ENCODE measurements at regions of chr4 and their contacts with region 1.

Region 1: GRCh38 chr4:3480528-3481112 is 17.5 kb downstream of the DOK7 start:
- DNase-seq: peak; percentile 43 to 71 (median 66)
- H3K4me3 ChIP-seq: no peak overlapping the region
- H3K27ac ChIP-seq: no peak overlapping the region
- H3K4me1 ChIP-seq: peaks cover 0 to 19% (median 14%) of the 10 kb centered on the region in 4 experiments
- H3K27me3 ChIP-seq: peaks cover 0 to 49% (median 11%) of the 10 kb centered on the region in 5 experiments

Region 2: GRCh38 chr4:2981256-2981819 is 499.3 kb before region 1 on chr4:
- CTCF ChIA-PET with region 1: no interaction called
- POLR2A ChIA-PET with region 1: no interaction called
- DNase-seq: peak in 2 of 3 donors; percentile 9 to 10
- H3K4me3 ChIP-seq: no peak overlapping the region
- H3K27ac ChIP-seq: no peak overlapping the region
- H3K4me1 ChIP-seq: no peaks in the 10 kb centered on the region
- H3K27me3 ChIP-seq: no peaks in the 10 kb centered on the region

Region 3: GRCh38 chr4:3470244-3471097 is 10.1 kb before region 1 on chr4:
- CTCF ChIA-PET with region 1: interaction called, 20 read pairs
- POLR2A ChIA-PET with region 1: no interaction called
- DNase-seq: no peak
- H3K4me3 ChIP-seq: no peak overlapping the region
- H3K27ac ChIP-seq: no peak overlapping the region
- H3K4me1 ChIP-seq: no peaks in the 10 kb centered on the region
- H3K27me3 ChIP-seq: peaks cover 0 to 9% (median 2%) of the 10 kb centered on the region in 5 experiments

Region 4: GRCh38 chr4:3492741-3493719 is 12.4 kb after region 1 on chr4:
- CTCF ChIA-PET with region 1: interaction called, 11 read pairs
- POLR2A ChIA-PET with region 1: no interaction called
- DNase-seq: no peak
- H3K4me3 ChIP-seq: no peak overlapping the region
- H3K27ac ChIP-seq: no peak overlapping the region
- H3K4me1 ChIP-seq: peaks cover 0 to 23% (median 0%) of the 10 kb centered on the region in 4 experiments
- H3K27me3 ChIP-seq: peaks cover 0 to 85% (median 9%) of the 10 kb centered on the region in 5 experiments

Measured in common myeloid progenitor, CD34-positive (primary cell).